Prostate gland (tissue), 2 donors: ENCODE measurements at regions of chr3 and their contacts with region 1.

Region 1: DNA sequence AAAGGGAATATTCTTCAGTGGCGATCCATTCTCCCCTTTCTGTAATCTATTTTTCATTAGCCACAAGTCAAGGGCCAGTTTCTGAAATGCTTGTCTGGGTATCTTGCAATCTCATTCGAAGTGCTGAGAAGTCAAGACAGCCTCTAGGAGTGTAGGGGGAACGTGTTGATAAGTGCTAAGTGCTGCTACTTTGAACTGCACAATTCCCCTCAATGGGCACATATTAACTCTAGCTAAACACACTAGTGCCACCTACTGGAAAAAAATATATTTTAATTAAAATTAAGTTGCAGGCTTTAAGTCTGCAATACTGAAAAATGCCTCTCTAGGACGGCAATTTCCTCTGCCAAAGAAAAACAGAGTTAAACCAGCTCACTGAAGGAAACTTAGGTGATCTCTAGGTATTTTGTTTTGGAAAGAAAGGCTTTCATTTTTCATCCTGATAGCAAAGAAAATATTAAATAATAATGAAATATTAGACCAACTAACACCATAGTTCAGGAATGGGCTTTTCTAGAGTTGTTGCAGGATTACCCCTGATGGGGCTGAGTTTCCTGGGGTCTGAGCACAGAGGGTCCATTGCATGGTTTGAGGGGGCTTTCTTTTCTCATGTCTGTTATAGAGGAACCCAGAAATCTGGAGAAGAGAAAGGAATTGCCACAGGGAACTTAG is 181.9 kb upstream of the KBTBD8 start:
- DNase-seq: no peak
- H3K4me3 ChIP-seq: no peak overlapping the region
- H3K27ac ChIP-seq: no peak overlapping the region
- H3K4me1 ChIP-seq: no peaks in the 10 kb centered on the region
- H3K27me3 ChIP-seq: no peaks in the 10 kb centered on the region
- CTCF ChIP-seq: peak; percentile 40 to 74 (median 64)
- POLR2A ChIP-seq: no peak

Region 2: GRCh38 chr3:66407611-66408218 is 408.5 kb before region 1 on chr3:
- intact Hi-C with region 1: loop called (anchors 2 kb)
- DNase-seq: peak; percentile 56
- H3K4me3 ChIP-seq: no peak overlapping the region
- H3K27ac ChIP-seq: peak overlapping the region in 1 of 2 donors; percentile 44
- H3K4me1 ChIP-seq: peaks cover 15% of the 10 kb centered on the region
- H3K27me3 ChIP-seq: no peaks in the 10 kb centered on the region
- CTCF ChIP-seq: peak; percentile 86 to 88 (median 87)
- POLR2A ChIP-seq: no peak

Region 3: GRCh38 chr3:66500576-66501482 is 315.4 kb before region 1 on chr3 and contains the start of gene LRIG1:
- intact Hi-C with region 1: loop called (anchors 2 kb)
- DNase-seq: peak; percentile 100
- H3K4me3 ChIP-seq: peak within 1 kb of the TSS; percentile 98 to 99
- H3K27ac ChIP-seq: peak within 1 kb of the TSS; percentile 92 to 97
- H3K4me1 ChIP-seq: peaks cover under 1% of the 10 kb centered on the region
- H3K27me3 ChIP-seq: no peaks in the 10 kb centered on the region
- CTCF ChIP-seq: peak; percentile 33 to 63 (median 50)
- POLR2A ChIP-seq: peak; percentile 86
- total RNA-seq, gene LRIG1: 119 to 186 TPM